B cell (primary cell): ENCODE measurements at regions of chr22 and their contacts with region 1.

Region 1: GRCh38 chr22:17501679-17502285 is 61.5 kb upstream of the SLC25A18 start:
- DNase-seq: peak; percentile 82
- ATAC-seq: peak; percentile 78
- H3K4me3 ChIP-seq: no peak overlapping the region
- H3K4me3 Mint-ChIP-seq: no peak overlapping the region
- H3K27ac ChIP-seq: no peak overlapping the region
- H3K27ac Mint-ChIP-seq: no peak overlapping the region
- H3K4me1 ChIP-seq: peaks cover 0 to 3% of the 10 kb centered on the region in 2 donors
- H3K4me1 Mint-ChIP-seq: peaks cover 4% of the 10 kb centered on the region
- H3K27me3 ChIP-seq: no peaks in the 10 kb centered on the region
- H3K27me3 Mint-ChIP-seq: no peaks in the 10 kb centered on the region
- CTCF ChIP-seq: peak; percentile 91

Region 2: DNA sequence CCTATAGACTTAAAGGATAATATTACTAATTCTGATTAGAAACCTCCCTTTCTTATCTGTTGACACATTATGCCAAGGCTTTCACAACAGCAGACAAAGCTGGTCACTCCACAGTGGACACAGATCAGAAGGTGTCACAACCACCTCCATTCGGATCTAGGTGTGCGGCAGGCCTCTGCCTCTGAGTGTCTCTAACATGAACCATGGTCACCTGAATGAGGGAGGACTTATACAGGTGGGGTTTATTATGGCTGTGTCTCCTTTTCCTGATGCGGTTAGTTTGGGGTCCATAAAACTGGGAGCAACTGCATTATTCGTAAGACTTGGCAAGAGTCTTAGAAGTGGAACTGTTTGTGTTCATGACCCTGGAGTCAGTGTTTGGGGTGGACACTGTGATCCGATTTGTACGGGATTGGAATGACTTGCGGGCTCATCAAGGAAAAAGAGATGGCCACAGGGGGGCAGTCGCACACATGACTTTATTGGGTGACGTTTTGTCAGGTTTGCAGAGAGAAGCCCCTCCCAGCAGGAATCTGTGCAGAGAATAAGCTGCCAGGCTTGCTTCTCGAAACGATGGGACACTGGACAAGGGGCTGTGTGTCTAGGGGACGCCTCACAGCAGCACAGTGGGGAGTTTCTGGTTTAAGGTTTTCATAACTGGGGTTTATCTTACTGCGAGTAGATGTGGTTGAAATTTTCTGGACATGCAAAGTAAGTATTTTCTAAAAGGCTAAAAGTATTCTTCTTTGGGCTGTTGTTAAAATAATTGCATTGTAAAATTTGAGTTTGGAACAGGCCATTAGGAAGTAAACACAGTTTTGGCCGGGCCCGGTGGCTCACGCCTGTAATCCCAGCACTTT is 584.4 kb before region 1 on chr22:
- CTCF ChIA-PET with region 1: interaction called, 22 read pairs
- POLR2A ChIA-PET with region 1: no interaction called
- intact Hi-C with region 1: no loop called
- DNase-seq: peak; percentile 61
- ATAC-seq: no peak
- H3K4me3 ChIP-seq: no peak overlapping the region
- H3K4me3 Mint-ChIP-seq: no peak overlapping the region
- H3K27ac ChIP-seq: no peak overlapping the region
- H3K27ac Mint-ChIP-seq: no peak overlapping the region
- H3K4me1 ChIP-seq: peaks cover 6 to 9% of the 10 kb centered on the region in 2 donors
- H3K4me1 Mint-ChIP-seq: peaks cover 21% of the 10 kb centered on the region
- H3K27me3 ChIP-seq: peaks cover 0 to 10% (median 2%) of the 10 kb centered on the region in 4 experiments
- H3K27me3 Mint-ChIP-seq: peaks cover 21% of the 10 kb centered on the region
- CTCF ChIP-seq: peak; percentile 73

Region 3: DNA sequence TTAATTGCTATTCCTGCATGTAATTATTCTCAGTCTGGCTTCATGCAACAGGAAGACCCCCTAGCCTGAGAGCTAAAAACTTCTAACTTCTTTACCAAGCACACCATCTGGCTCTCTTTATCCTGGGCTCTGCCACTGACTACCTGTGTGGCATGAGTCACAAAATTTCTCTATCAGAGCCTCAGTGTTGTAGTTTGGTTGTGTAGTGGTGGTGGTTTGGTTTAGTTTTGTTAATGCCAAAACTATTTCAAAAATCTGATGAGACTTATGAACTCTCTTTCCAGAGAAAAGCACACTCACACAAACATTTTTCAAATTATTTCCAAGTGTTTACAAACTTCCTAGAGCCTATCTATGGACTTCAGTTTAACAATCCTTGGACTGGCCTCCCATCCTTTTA is 424.5 kb before region 1 on chr22:
- CTCF ChIA-PET with region 1: interaction called, 72 read pairs
- POLR2A ChIA-PET with region 1: interaction called, 11 read pairs
- intact Hi-C with region 1: loop called (anchors 1 kb)
- DNase-seq: no peak
- ATAC-seq: no peak
- H3K4me3 ChIP-seq: no peak overlapping the region
- H3K4me3 Mint-ChIP-seq: no peak overlapping the region
- H3K27ac ChIP-seq: no peak overlapping the region
- H3K27ac Mint-ChIP-seq: no peak overlapping the region
- H3K4me1 ChIP-seq: no peaks in the 10 kb centered on the region
- H3K4me1 Mint-ChIP-seq: no peaks in the 10 kb centered on the region
- H3K27me3 ChIP-seq: peaks cover 0 to 9% (median 1%) of the 10 kb centered on the region in 4 experiments
- H3K27me3 Mint-ChIP-seq: no peaks in the 10 kb centered on the region
- CTCF ChIP-seq: no peak

Region 4: DNA sequence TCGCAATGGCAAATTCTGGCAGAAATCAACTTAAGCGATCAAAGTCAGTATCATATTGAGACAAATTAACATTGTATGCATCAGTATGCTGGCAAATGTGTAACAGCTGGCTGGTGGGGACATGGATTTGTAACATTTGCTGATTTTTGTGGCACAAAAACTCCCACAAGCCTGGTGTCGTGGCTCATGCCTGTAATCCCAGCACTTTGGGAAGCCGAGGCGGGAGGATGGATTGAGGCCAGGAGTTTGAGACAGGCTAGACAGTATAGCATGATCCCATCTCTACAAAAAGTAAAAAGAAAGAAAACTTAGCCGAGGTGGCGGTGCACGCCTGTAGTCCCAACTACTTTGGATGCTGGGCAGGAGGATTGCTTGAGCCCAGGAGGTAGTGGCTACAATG is 325.1 kb before region 1 on chr22:
- CTCF ChIA-PET with region 1: interaction called, 302 read pairs
- POLR2A ChIA-PET with region 1: interaction called, 4 read pairs
- intact Hi-C with region 1: no loop called
- DNase-seq: no peak
- ATAC-seq: no peak
- H3K4me3 ChIP-seq: no peak overlapping the region
- H3K4me3 Mint-ChIP-seq: no peak overlapping the region
- H3K27ac ChIP-seq: no peak overlapping the region
- H3K27ac Mint-ChIP-seq: no peak overlapping the region
- H3K4me1 ChIP-seq: peaks cover 2 to 7% of the 10 kb centered on the region in 2 donors
- H3K4me1 Mint-ChIP-seq: peaks cover 5% of the 10 kb centered on the region
- H3K27me3 ChIP-seq: no peaks in the 10 kb centered on the region
- H3K27me3 Mint-ChIP-seq: no peaks in the 10 kb centered on the region
- CTCF ChIP-seq: no peak

Region 5: GRCh38 chr22:17205432-17205831 is 296.4 kb before region 1 on chr22:
- CTCF ChIA-PET with region 1: interaction called, 145 read pairs
- POLR2A ChIA-PET with region 1: no interaction called
- intact Hi-C with region 1: loop called (anchors 1 kb)
- DNase-seq: no peak
- ATAC-seq: peak; percentile 49
- H3K4me3 ChIP-seq: no peak overlapping the region
- H3K4me3 Mint-ChIP-seq: no peak overlapping the region
- H3K27ac ChIP-seq: no peak overlapping the region
- H3K27ac Mint-ChIP-seq: no peak overlapping the region
- H3K4me1 ChIP-seq: no peaks in the 10 kb centered on the region
- H3K4me1 Mint-ChIP-seq: no peaks in the 10 kb centered on the region
- H3K27me3 ChIP-seq: no peaks in the 10 kb centered on the region
- H3K27me3 Mint-ChIP-seq: no peaks in the 10 kb centered on the region
- CTCF ChIP-seq: no peak

Region 6: GRCh38 chr22:17368554-17369438 is 133.0 kb before region 1 on chr22:
- CTCF ChIA-PET with region 1: interaction called, 19 read pairs
- POLR2A ChIA-PET with region 1: no interaction called
- intact Hi-C with region 1: loop called (anchors 1 kb)
- DNase-seq: peak; percentile 64
- ATAC-seq: peak; percentile 73
- H3K4me3 ChIP-seq: peak overlapping the region; percentile 11 to 65 (median 50)
- H3K4me3 Mint-ChIP-seq: peak overlapping the region; percentile 89
- H3K27ac ChIP-seq: no peak overlapping the region
- H3K27ac Mint-ChIP-seq: peak overlapping the region; percentile 47
- H3K4me1 ChIP-seq: peaks cover 27 to 34% of the 10 kb centered on the region in 2 donors
- H3K4me1 Mint-ChIP-seq: peaks cover 31% of the 10 kb centered on the region
- H3K27me3 ChIP-seq: peaks cover 0 to 44% (median 25%) of the 10 kb centered on the region in 4 experiments
- H3K27me3 Mint-ChIP-seq: peaks cover 45% of the 10 kb centered on the region
- CTCF ChIP-seq: no peak

Region 7: GRCh38 chr22:17422736-17423343 is 78.9 kb before region 1 on chr22:
- CTCF ChIA-PET with region 1: no interaction called
- POLR2A ChIA-PET with region 1: no interaction called
- intact Hi-C with region 1: no loop called
- DNase-seq: no peak
- ATAC-seq: no peak
- H3K4me3 ChIP-seq: no peak overlapping the region
- H3K4me3 Mint-ChIP-seq: no peak overlapping the region
- H3K27ac ChIP-seq: no peak overlapping the region
- H3K27ac Mint-ChIP-seq: no peak overlapping the region
- H3K4me1 ChIP-seq: no peaks in the 10 kb centered on the region
- H3K4me1 Mint-ChIP-seq: no peaks in the 10 kb centered on the region
- H3K27me3 ChIP-seq: no peaks in the 10 kb centered on the region
- H3K27me3 Mint-ChIP-seq: peaks cover 2% of the 10 kb centered on the region
- CTCF ChIP-seq: no peak

Region 8: DNA sequence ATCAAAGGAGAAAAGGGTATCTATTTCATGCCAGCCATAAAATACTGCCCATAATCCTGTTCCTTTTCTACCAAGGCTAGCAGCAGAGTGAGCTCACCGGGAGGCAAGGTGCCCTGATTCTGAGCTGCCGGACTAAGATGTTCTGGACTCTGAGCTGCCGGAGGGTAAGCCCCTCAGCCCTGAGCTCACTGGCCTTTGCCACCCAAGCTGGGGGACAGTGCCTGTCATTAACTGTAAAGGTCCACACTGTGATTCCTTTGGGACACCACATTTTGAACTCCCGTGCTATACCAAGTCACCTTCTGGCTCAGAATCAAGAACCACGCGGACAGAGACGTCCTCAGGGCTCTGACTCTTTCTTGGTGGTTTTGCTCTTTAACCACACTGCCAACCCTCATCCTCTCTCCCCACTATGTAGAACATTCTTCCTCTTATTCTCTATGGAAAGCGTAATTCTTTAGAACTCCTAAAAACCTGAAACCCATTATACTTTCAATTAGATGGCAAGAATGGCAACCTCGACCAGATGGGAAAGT is 360.9 kb after region 1 on chr22:
- CTCF ChIA-PET with region 1: no interaction called
- POLR2A ChIA-PET with region 1: no interaction called
- intact Hi-C with region 1: no loop called
- DNase-seq: no peak
- ATAC-seq: no peak
- H3K4me3 ChIP-seq: no peak overlapping the region
- H3K4me3 Mint-ChIP-seq: no peak overlapping the region
- H3K27ac ChIP-seq: no peak overlapping the region
- H3K27ac Mint-ChIP-seq: no peak overlapping the region
- H3K4me1 ChIP-seq: no peaks in the 10 kb centered on the region
- H3K4me1 Mint-ChIP-seq: no peaks in the 10 kb centered on the region
- H3K27me3 ChIP-seq: no peaks in the 10 kb centered on the region
- H3K27me3 Mint-ChIP-seq: no peaks in the 10 kb centered on the region
- CTCF ChIP-seq: no peak